ENCODE measurements at regions of chr12 and their contacts with region 1.

Region 1: DNA sequence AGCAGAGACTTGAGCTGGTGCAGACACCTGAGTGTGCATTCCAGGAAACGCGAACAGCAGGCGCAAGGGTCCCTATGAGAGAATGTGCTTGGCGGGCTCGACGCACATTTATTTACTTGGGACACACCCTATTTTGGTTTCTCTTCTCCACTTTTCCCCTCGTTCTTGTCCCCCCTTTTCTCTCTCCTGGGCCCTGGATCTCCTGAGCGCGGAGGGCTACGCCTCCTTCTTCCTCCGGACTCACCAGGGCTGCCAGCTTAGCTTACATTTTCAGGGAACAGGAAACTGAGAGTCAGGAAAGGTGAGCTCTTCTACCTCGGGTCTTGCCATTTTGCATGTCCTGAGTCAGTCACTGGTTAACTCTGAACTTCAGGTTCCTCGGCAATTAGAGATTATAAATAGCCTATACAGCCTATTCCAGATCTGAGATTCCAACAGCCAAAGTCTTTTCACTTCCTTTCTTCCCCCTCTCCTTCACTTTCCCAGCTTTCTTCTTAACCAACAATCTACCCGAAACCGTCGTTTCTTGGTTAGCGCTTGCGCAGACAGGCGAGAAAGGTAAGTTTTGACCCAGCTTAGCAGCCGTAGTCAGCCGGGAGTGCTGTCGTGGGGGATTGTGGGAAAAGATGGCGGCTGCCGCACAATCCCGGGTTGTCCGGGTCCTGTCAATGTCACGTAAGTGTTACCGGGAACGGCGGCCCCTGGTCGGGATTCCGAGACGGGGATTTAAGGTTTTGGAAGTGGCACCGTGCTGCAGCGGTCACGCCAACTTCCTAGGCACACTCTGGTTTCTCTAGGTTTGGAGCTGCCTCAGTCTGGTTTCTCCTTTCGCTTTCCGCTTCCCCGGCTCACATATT is at the starts of genes AKAP3 and NDUFA9:
- DNase-seq: peak; percentile 84
- H3K4me3 Mint-ChIP-seq: peak within 1 kb of the TSS; percentile 97
- H3K27ac Mint-ChIP-seq: peak within 1 kb of the TSS; percentile 99
- H3K4me1 Mint-ChIP-seq: peaks cover 29% of the 10 kb centered on the region
- H3K27me3 Mint-ChIP-seq: no peaks in the 10 kb centered on the region
- CTCF ChIP-seq: no peak
- total RNA-seq, gene AKAP3: 0.54 and 1.1 TPM in 2 replicates
- total RNA-seq, gene NDUFA9: 90.1 and 110 TPM in 2 replicates

Region 2: GRCh38 chr12:4538207-4539160 is 110.2 kb before region 1 on chr12 and contains the start of gene RAD51AP1:
- CTCF ChIA-PET with region 1: no interaction called
- POLR2A ChIA-PET with region 1: interaction called, 11 read pairs
- intact Hi-C with region 1: no loop called
- DNase-seq: peak; percentile 96
- H3K4me3 Mint-ChIP-seq: peak within 1 kb of the TSS; percentile 100
- H3K27ac Mint-ChIP-seq: peak within 1 kb of the TSS; percentile 99
- H3K4me1 Mint-ChIP-seq: peaks cover 23% of the 10 kb centered on the region
- H3K27me3 Mint-ChIP-seq: no peaks in the 10 kb centered on the region
- CTCF ChIP-seq: no peak
- total RNA-seq, gene RAD51AP1: 7.1 and 10.8 TPM in 2 replicates

Region 3: DNA sequence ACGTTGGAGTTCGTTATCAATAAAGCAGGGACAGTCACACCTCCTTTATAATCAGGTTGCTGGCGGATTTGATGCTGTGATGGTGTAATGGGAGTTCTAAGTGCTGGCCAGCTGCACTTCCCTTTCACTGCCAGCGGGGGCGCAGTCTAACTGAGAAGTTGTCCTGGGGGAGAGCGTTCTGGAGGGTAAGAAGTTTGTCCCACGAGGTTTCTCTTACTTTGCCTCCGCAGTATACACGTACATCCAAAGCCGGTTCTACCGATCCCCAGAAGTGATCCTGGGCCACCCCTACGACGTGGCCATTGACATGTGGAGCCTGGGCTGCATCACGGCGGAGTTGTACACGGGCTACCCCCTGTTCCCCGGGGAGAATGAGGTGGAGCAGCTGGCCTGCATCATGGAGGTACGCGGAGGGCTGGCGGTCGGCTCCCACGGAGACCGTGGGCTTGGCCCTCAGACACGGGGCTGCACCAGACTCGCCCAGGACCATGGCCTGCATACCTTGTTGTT is 44.0 kb before region 1 on chr12:
- CTCF ChIA-PET with region 1: interaction called, 17 read pairs
- POLR2A ChIA-PET with region 1: interaction called, 27 read pairs
- intact Hi-C with region 1: loop called (anchors 1 kb)
- DNase-seq: peak; percentile 88
- H3K4me3 Mint-ChIP-seq: peak overlapping the region; percentile 98
- H3K27ac Mint-ChIP-seq: peak overlapping the region; percentile 94
- H3K4me1 Mint-ChIP-seq: no peaks in the 10 kb centered on the region
- H3K27me3 Mint-ChIP-seq: peaks cover 44% of the 10 kb centered on the region
- CTCF ChIP-seq: peak; percentile 97

Region 4: DNA sequence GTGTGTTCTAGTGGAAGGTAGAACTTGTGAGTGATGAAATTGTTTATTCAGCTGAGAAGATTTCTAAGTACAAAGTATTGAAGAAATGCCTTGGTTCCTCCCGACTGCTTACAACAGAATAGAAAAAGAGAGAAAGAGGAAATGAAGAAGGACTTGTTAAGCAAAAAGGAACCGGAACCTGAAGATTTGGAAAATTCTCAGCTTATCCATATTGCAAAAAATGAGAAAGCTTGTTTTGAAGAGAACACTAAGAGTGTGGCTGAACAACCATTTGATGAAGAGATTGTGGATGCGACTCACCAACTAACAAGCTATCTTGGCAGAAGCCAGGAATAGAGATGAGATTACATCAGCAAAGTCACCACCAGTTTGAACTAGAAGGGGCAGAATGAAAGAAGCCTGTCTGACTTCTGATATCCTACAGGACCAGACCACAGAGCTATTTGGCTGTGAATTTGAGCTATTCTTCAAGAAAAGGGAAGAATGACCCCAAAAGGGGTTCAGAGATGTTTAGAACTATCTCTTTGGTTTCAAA is 15.3 kb after region 1 on chr12:
- CTCF ChIA-PET with region 1: no interaction called
- POLR2A ChIA-PET with region 1: interaction called, 30 read pairs
- intact Hi-C with region 1: no loop called
- DNase-seq: peak; percentile 43
- H3K4me3 Mint-ChIP-seq: no peak overlapping the region
- H3K27ac Mint-ChIP-seq: peak overlapping the region; percentile 2
- H3K4me1 Mint-ChIP-seq: peaks cover 11% of the 10 kb centered on the region
- H3K27me3 Mint-ChIP-seq: no peaks in the 10 kb centered on the region
- CTCF ChIP-seq: no peak